ENCODE measurements at regions of chr3 and their contacts with region 1.

Region 1: GRCh38 chr3:119498186-119498987 is at the start of gene TIMMDC1:
- DNase-seq: peak; percentile 96
- ATAC-seq: peak; percentile 98
- H3K4me3 Mint-ChIP-seq: peak within 1 kb of the TSS; percentile 99
- H3K27ac Mint-ChIP-seq: peak within 1 kb of the TSS; percentile 97
- H3K4me1 Mint-ChIP-seq: peaks cover 38% of the 10 kb centered on the region
- H3K27me3 Mint-ChIP-seq: no peaks in the 10 kb centered on the region
- CTCF ChIP-seq: no peak
- total RNA-seq, gene TIMMDC1: 73.0 and 76.1 TPM in 2 replicates

Region 2: DNA sequence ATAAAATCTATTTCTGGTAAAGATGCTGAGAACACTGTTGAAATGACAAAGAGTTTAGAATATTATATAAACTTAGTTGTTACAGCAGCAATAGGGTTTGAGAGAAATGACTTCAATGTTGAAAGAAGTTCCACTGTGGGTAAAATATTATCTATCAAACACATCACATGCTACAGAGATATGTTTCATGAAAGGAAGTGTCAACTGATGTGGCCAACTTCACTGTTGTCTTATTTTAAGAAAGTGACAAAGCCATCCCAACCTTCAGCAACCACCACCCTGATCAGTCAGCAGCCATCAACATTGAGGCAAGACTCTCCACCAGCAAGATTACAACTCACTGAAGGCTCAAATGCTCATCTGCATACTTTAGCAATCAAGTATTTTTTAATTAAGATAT is 55.2 kb before region 1 on chr3:
- CTCF ChIA-PET with region 1: no interaction called
- POLR2A ChIA-PET with region 1: no interaction called
- intact Hi-C with region 1: no loop called
- DNase-seq: no peak
- ATAC-seq: no peak
- H3K4me3 Mint-ChIP-seq: no peak overlapping the region
- H3K27ac Mint-ChIP-seq: no peak overlapping the region
- H3K4me1 Mint-ChIP-seq: no peaks in the 10 kb centered on the region
- H3K27me3 Mint-ChIP-seq: no peaks in the 10 kb centered on the region
- CTCF ChIP-seq: no peak

Region 3: GRCh38 chr3:119463171-119464169 is 34.9 kb before region 1 on chr3 and contains the start of gene TMEM39A:
- CTCF ChIA-PET with region 1: no interaction called
- POLR2A ChIA-PET with region 1: interaction called, 102 read pairs
- intact Hi-C with region 1: loop called (anchors 1 kb)
- DNase-seq: peak; percentile 99
- ATAC-seq: peak; percentile 88
- H3K4me3 Mint-ChIP-seq: peak within 1 kb of the TSS; percentile 98
- H3K27ac Mint-ChIP-seq: peak within 1 kb of the TSS; percentile 97
- H3K4me1 Mint-ChIP-seq: peaks cover 34% of the 10 kb centered on the region
- H3K27me3 Mint-ChIP-seq: no peaks in the 10 kb centered on the region
- CTCF ChIP-seq: no peak
- total RNA-seq, gene TMEM39A: 33.7 and 45.6 TPM in 2 replicates

Region 4: GRCh38 chr3:119524931-119525662 is 26.7 kb after region 1 on chr3:
- CTCF ChIA-PET with region 1: no interaction called
- POLR2A ChIA-PET with region 1: interaction called, 14 read pairs
- intact Hi-C with region 1: no loop called
- DNase-seq: no peak
- ATAC-seq: no peak
- H3K4me3 Mint-ChIP-seq: no peak overlapping the region
- H3K27ac Mint-ChIP-seq: peak overlapping the region; percentile 15
- H3K4me1 Mint-ChIP-seq: peaks cover 10% of the 10 kb centered on the region
- H3K27me3 Mint-ChIP-seq: no peaks in the 10 kb centered on the region
- CTCF ChIP-seq: no peak

Region 5: DNA sequence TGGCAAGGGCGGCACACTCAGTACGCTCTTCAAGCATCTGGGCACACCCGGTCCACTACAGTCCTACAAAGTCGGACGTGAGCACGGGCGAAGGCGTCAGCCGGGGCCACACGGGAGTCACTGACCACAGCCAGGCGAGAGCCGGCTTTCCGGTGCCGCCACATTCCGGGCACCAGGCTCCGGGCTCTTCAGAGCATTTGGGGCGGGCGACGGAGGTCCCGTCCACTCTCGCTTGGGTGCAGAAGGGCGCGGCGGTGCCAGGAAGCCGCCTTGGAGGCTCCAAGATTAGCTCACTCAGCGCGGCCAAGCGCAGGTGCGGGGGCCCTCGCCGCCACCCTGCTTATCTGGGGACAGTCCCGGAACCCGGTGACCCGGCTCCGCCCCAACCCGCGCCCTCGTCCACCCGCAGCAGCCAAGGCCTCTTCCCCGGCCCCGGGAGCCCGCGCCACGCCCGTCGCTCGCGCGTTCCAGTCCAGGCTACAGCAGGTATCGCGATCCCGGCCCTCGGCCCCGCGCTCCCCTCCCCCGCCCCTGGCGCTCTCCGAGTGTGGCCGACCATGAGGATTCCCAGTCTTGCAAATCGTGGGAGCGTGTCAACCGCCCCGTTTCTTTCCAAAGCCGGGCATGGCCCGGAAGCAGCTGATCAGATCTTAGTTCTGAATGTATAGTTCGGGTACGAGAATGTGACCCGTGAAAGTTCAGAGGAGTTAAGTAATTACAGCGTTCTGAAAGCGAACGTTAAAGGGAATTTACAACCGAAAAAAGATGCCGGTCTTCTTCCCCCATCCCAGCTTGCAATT is 81.2 kb after region 1 on chr3 and contains the start of gene ADPRH:
- CTCF ChIA-PET with region 1: no interaction called
- POLR2A ChIA-PET with region 1: interaction called, 14 read pairs
- intact Hi-C with region 1: loop called (anchors 1 kb)
- DNase-seq: peak; percentile 76
- ATAC-seq: peak; percentile 76
- H3K4me3 Mint-ChIP-seq: peak within 1 kb of the TSS; percentile 97
- H3K27ac Mint-ChIP-seq: peak within 1 kb of the TSS; percentile 99
- H3K4me1 Mint-ChIP-seq: peaks cover 37% of the 10 kb centered on the region
- H3K27me3 Mint-ChIP-seq: no peaks in the 10 kb centered on the region
- CTCF ChIP-seq: no peak
- total RNA-seq, gene ADPRH: 41.2 and 43.8 TPM in 2 replicates